GM10248 (cell line): ENCODE measurements at regions of chr2 and their contacts with region 1.

Region 1: DNA sequence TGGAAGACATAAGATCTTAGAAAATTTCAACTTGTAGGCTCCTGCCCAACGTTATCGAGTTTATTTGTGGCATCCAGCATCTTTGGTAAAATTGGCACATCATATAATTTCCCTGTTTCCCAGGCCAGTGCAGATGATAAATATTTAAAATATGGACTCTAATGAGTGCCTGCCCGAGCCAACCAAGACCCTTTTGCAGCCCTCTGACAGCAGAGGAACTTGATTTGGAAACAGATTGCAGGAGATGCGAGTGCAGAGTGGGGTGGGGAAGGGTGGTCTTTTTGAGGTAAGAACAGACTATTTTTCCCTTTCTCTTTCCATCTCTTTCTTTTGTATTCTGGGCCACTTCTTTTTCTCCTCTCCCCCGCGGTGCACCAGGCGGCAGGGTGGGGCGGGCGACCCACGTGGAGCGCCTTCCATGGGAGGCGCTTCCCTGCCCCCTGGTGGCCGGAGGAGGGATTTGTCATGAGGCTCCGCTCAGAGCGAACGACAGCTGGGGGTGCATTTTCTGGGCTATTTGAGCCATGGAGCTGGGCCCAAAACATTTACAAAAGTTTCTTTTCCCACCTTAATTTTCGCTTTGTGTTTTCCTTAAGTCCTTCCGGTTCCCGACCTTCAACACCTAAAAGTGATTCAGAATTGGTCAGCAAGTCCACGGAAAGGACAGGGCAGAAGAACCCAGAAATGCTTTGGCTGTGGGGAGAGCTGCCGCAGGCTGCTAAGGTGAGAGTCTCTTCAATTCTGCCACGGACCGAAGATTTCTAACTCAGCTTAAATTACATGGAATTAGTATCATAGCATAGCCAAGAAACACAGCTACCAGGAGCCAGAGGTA is 32.7 kb downstream of the LPIN1 start:
- DNase-seq: peak; percentile 84
- CTCF ChIP-seq: peak; percentile 93

Region 2: GRCh38 chr2:11417946-11418585 is 361.1 kb before region 1 on chr2:
- CTCF ChIA-PET with region 1: no interaction called
- POLR2A ChIA-PET with region 1: no interaction called
- DNase-seq: no peak
- CTCF ChIP-seq: peak; percentile 18

Region 3: DNA sequence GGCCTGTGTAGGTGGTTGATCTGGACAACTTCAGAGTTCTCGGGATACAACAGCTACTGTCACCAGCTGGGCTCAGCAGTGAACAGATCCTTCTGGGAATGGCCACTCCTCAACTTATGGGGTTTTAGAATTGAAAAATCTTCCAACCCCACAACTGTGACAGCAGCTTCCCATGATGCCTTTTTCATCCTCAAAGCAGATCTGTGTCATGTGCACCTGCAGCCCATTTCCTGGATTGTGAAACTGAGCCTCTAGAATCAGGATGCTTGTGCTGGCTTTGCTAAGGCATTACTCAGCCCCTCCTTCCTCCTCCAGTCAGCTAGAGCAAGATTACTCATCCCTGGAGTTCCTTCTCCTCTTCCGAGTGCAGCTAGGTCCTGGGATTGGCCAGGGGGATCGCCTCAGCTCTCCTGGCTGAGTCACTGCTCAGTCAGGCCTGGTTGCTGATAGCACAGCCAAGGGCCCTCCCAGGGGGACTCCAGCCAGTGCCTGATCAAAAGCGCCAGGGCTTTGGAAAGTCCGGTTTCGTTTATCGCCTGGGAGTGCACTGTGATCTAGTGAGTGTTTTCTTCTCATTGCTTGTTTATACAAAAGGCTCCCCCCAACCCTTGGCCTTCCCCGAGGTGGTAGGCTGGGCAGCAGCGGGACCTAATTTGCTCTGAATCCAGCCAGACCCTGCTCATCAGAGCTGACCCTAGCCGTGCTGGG is 35.1 kb before region 1 on chr2:
- CTCF ChIA-PET with region 1: interaction called, 207 read pairs
- POLR2A ChIA-PET with region 1: no interaction called
- DNase-seq: peak; percentile 82
- CTCF ChIP-seq: no peak

Region 4: GRCh38 chr2:11764359-11764758 is 14.8 kb before region 1 on chr2:
- CTCF ChIA-PET with region 1: interaction called, 13 read pairs
- POLR2A ChIA-PET with region 1: no interaction called
- DNase-seq: no peak
- CTCF ChIP-seq: no peak

Region 5: GRCh38 chr2:11829947-11830707 is 51.0 kb after region 1 on chr2:
- CTCF ChIA-PET with region 1: no interaction called
- POLR2A ChIA-PET with region 1: no interaction called
- DNase-seq: peak; percentile 69
- CTCF ChIP-seq: peak; percentile 22